Activated naive CD4-positive, alpha-beta T cell treated with anti-CD3 and anti-CD28 coated beads for 36 hours (primary cell): ENCODE measurements at regions of chr19 and their contacts with region 1.

Region 1: GRCh38 chr19:13846557-13847406 is 30.2 kb upstream of the NANOS3 start:
- DNase-seq: peak; percentile 97
- H3K4me3 Mint-ChIP-seq: peak overlapping the region; percentile 72
- H3K27ac Mint-ChIP-seq: peak overlapping the region; percentile 98
- H3K4me1 Mint-ChIP-seq: peaks cover 52% of the 10 kb centered on the region
- H3K27me3 Mint-ChIP-seq: no peaks in the 10 kb centered on the region

Region 2: GRCh38 chr19:12789904-12790619 is 1056.7 kb before region 1 on chr19:
- CTCF ChIA-PET with region 1: no interaction called
- intact Hi-C with region 1: loop called (anchors 10 kb)
- DNase-seq: peak; percentile 97
- H3K4me3 Mint-ChIP-seq: peak overlapping the region; percentile 97
- H3K27ac Mint-ChIP-seq: peak overlapping the region; percentile 96
- H3K4me1 Mint-ChIP-seq: peaks cover 25% of the 10 kb centered on the region
- H3K27me3 Mint-ChIP-seq: no peaks in the 10 kb centered on the region

Region 3: DNA sequence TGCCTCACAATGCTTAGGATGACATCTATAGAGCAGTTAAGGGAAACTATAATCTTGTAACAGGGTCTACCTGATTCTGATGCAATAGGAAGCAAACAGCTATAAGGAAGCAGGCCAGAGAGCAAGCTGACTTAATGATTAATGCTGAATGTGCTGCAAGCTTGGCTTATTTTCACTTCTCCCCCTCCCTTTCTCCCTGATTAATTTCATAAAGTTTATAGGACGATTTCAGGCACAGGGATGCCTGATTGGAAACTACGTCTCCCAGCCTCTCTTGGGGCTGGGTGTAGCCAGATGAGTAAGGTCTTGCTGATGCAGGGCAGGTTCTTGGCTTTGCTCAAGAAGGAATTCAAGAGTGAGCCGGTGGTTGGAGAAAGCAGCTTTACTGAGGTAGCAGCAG is 165.3 kb before region 1 on chr19:
- CTCF ChIA-PET with region 1: no interaction called
- intact Hi-C with region 1: no loop called
- DNase-seq: no peak
- H3K4me3 Mint-ChIP-seq: no peak overlapping the region
- H3K27ac Mint-ChIP-seq: no peak overlapping the region
- H3K4me1 Mint-ChIP-seq: no peaks in the 10 kb centered on the region
- H3K27me3 Mint-ChIP-seq: peaks cover 13% of the 10 kb centered on the region

Region 4: DNA sequence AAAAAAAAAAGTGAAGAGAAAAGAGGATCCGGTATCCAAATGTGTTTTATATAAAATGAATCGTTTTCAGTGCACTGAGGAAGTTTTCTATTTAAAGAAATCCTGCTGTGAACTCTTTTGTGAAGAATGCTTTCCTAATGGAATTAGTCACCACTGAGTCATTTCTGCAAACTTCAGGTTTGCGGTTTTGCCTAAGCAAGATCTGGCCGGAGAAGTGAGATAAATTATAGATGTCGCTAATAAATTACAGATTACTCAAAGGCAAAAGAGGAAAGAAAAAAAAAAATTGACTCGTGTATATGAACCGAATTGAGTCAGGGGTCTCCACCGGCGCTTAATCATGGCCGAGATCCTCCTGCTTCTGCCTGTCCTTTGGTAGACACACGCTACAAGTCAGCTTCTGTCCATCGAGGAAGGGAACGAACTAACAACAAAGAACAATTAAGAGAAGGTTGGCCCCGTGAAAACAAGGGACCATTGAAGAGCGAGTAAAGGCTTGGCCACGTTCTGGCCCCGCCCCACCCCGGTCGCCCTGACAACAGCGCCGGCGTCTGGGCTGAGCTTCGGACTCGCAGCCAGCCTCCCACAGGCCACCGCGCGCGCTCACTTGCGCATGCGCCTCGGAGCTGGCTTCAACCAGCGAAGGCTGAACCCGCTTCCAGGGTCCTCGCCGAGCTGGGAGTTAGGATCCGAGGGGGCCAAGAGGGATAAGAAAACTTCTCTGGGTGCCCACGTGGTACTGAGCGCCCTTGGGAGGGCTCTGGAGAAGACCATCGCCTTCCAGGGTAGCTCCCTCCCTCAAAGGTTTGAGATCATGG is 115.4 kb before region 1 on chr19:
- CTCF ChIA-PET with region 1: no interaction called
- intact Hi-C with region 1: loop called (anchors 1 kb)
- DNase-seq: peak; percentile 95
- H3K4me3 Mint-ChIP-seq: peak overlapping the region; percentile 84
- H3K27ac Mint-ChIP-seq: peak overlapping the region; percentile 94
- H3K4me1 Mint-ChIP-seq: peaks cover 23% of the 10 kb centered on the region
- H3K27me3 Mint-ChIP-seq: no peaks in the 10 kb centered on the region

Region 5: GRCh38 chr19:13784731-13785452 is 61.9 kb before region 1 on chr19:
- CTCF ChIA-PET with region 1: interaction called, 7 read pairs
- intact Hi-C with region 1: loop called (anchors 1 kb)
- DNase-seq: peak; percentile 87
- H3K4me3 Mint-ChIP-seq: peak overlapping the region; percentile 54
- H3K27ac Mint-ChIP-seq: peak overlapping the region; percentile 59
- H3K4me1 Mint-ChIP-seq: peaks cover 55% of the 10 kb centered on the region
- H3K27me3 Mint-ChIP-seq: no peaks in the 10 kb centered on the region

Region 6: GRCh38 chr19:13833330-13834243 is 13.2 kb before region 1 on chr19:
- CTCF ChIA-PET with region 1: interaction called, 5 read pairs
- intact Hi-C with region 1: loop called (anchors 2 kb)
- DNase-seq: peak; percentile 98
- H3K4me3 Mint-ChIP-seq: peak overlapping the region; percentile 84
- H3K27ac Mint-ChIP-seq: peak overlapping the region; percentile 99
- H3K4me1 Mint-ChIP-seq: peaks cover 35% of the 10 kb centered on the region
- H3K27me3 Mint-ChIP-seq: no peaks in the 10 kb centered on the region

Region 7: GRCh38 chr19:14006243-14006765 is 159.5 kb after region 1 on chr19 and contains the start of gene RFX1:
- CTCF ChIA-PET with region 1: no interaction called
- intact Hi-C with region 1: loop called (anchors 2 kb)
- DNase-seq: peak; percentile 100
- H3K4me3 Mint-ChIP-seq: peak within 1 kb of the TSS; percentile 90
- H3K27ac Mint-ChIP-seq: peak within 1 kb of the TSS; percentile 96
- H3K4me1 Mint-ChIP-seq: peaks cover 39% of the 10 kb centered on the region
- H3K27me3 Mint-ChIP-seq: no peaks in the 10 kb centered on the region
- total RNA-seq, gene RFX1: 13.8 to 14.0 TPM